ENCODE measurements at regions of chr3 and their contacts with region 1.

Region 1: GRCh38 chr3:10322352-10322710 is 1.4 kb upstream of the SEC13 start:
- DNase-seq: peak in 3 of 14 experiments; percentile 32 to 53 (median 47)
- ATAC-seq: no peak
- H3K4me3 ChIP-seq: no peak overlapping the region
- H3K4me3 Mint-ChIP-seq: peak overlapping the region; percentile 87
- H3K27ac ChIP-seq: no peak overlapping the region
- H3K27ac Mint-ChIP-seq: peak overlapping the region; percentile 91
- H3K4me1 ChIP-seq: peaks cover 32% of the 10 kb centered on the region
- H3K4me1 Mint-ChIP-seq: peaks cover 32% of the 10 kb centered on the region
- H3K27me3 ChIP-seq: peaks cover 0 to 3% of the 10 kb centered on the region in 2 experiments
- H3K27me3 Mint-ChIP-seq: peaks cover 6% of the 10 kb centered on the region
- CTCF ChIP-seq: peak; percentile 34

Region 2: GRCh38 chr3:8963137-8963869 is 1359.0 kb before region 1 on chr3 and contains the start of gene RAD18:
- CTCF ChIA-PET with region 1: no interaction called
- POLR2A ChIA-PET with region 1: no interaction called
- intact Hi-C with region 1: loop called in 1 of 2 experiments (anchors 5 kb)
- DNase-seq: peak; percentile 87 to 96 (median 90)
- ATAC-seq: peak; percentile 93
- H3K4me3 ChIP-seq: peak within 1 kb of the TSS; percentile 88
- H3K4me3 Mint-ChIP-seq: peak within 1 kb of the TSS; percentile 97
- H3K27ac ChIP-seq: peak within 1 kb of the TSS; percentile 80 to 92
- H3K27ac Mint-ChIP-seq: peak within 1 kb of the TSS; percentile 95
- H3K4me1 ChIP-seq: peaks cover 15% of the 10 kb centered on the region
- H3K4me1 Mint-ChIP-seq: peaks cover 43% of the 10 kb centered on the region
- H3K27me3 ChIP-seq: no peaks in the 10 kb centered on the region
- H3K27me3 Mint-ChIP-seq: peaks cover 1% of the 10 kb centered on the region
- CTCF ChIP-seq: no peak
- total RNA-seq, gene RAD18: 9.6 to 10.0 TPM

Region 3: DNA sequence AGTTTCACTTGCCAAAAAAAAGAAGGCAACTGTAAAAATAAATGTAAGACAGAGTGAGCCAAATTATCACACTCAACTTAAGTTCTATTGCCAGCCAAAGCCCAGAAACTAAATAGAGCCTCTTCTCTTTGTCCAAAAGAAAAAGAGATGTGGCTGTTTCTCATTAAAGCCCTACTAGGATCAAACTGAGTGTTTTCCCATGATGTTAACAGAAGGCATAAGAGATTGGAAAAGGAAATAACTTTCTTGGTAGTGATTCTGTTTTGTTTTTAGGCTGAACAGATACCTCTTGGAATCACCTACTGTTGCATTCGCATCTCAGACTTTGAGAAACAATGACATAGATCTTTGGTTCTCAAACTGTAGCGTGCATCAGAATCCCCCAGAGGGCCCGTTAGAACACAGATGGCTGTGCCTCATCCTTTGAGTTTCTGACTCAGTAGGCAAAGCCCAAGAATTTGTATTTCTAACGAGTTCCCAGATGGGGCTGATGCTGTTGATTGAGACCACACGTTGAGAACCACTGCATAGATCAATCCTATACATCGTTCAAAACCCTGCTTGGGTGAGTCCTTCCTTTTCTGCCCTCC is 1030.4 kb before region 1 on chr3:
- CTCF ChIA-PET with region 1: no interaction called
- POLR2A ChIA-PET with region 1: no interaction called
- intact Hi-C with region 1: no loop called
- DNase-seq: no peak
- ATAC-seq: no peak
- H3K4me3 ChIP-seq: no peak overlapping the region
- H3K4me3 Mint-ChIP-seq: no peak overlapping the region
- H3K27ac ChIP-seq: no peak overlapping the region
- H3K27ac Mint-ChIP-seq: no peak overlapping the region
- H3K4me1 ChIP-seq: no peaks in the 10 kb centered on the region
- H3K4me1 Mint-ChIP-seq: no peaks in the 10 kb centered on the region
- H3K27me3 ChIP-seq: peaks cover 0 to 3% of the 10 kb centered on the region in 2 experiments
- H3K27me3 Mint-ChIP-seq: peaks cover 33% of the 10 kb centered on the region
- CTCF ChIP-seq: no peak

Region 4: DNA sequence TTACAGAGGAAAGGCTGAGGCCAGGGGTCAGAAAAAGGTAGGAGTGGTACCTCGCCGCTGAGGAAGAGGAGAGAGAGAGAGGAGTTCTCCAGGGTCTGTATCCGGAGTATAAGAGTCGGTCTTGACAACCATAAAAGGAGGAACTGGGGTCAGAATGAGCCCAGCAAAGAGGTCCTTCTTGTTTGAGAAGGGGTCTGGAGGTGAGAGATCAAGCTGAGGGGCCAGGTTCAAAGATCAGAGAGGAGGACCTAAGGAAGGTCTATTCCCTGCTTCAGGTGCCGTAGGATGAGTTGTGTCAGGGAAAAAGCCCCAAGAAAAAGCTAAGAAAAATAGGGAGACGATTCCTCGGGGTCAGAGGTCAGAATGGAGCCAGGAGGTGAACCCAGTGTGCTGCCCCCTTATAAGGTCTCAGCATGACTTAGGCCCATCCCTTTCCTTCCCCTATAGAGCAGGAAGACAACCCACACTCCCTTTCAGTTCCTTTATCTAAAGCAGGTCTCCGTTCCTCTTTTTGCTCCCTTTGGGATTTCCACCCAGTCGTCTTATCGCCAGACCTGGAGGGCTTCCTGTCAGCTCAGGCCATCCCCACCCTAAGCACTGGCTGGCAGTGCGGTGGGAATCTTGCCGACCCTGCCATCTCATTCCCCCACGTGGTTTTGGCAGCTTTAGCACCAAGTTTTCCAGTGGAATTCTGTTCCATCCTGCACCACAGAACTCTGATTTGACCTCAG is 672.4 kb before region 1 on chr3:
- CTCF ChIA-PET with region 1: no interaction called
- POLR2A ChIA-PET with region 1: interaction called, 8 read pairs
- intact Hi-C with region 1: loop called in 1 of 2 experiments (anchors 5 kb)
- DNase-seq: peak in 3 of 14 experiments; percentile 40 to 57 (median 53)
- ATAC-seq: no peak
- H3K4me3 ChIP-seq: peak overlapping the region; percentile 92
- H3K4me3 Mint-ChIP-seq: peak overlapping the region; percentile 96
- H3K27ac ChIP-seq: peak overlapping the region; percentile 78 to 92
- H3K27ac Mint-ChIP-seq: peak overlapping the region; percentile 87
- H3K4me1 ChIP-seq: peaks cover 36% of the 10 kb centered on the region
- H3K4me1 Mint-ChIP-seq: peaks cover 35% of the 10 kb centered on the region
- H3K27me3 ChIP-seq: no peaks in the 10 kb centered on the region
- H3K27me3 Mint-ChIP-seq: no peaks in the 10 kb centered on the region
- CTCF ChIP-seq: no peak

Region 5: DNA sequence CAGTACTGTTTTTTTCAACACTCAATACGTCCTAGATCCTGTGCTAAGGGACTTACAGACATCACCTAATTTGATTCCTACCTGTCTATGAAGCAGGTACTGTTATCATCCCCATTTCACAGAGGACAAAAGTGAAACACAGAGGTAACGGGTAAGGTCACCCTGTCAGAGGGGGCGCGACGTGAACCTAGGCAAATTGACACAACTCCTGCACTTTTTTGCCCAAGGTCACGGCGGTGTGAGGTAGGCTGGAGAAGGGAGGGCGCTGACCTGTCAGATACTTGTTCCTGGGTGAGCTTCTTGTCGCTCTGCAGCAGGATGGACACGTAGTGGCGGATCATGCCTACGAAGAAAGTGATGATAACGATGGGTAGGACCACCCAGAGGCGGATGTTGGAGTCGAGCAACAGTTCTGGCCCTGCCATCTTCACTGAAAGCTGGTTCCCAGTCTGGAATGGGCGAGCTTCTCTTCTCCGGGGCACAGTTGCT is 336.1 kb before region 1 on chr3:
- CTCF ChIA-PET with region 1: no interaction called
- POLR2A ChIA-PET with region 1: interaction called, 11 read pairs
- intact Hi-C with region 1: no loop called
- DNase-seq: no peak
- ATAC-seq: peak; percentile 44
- H3K4me3 ChIP-seq: peak overlapping the region; percentile 99
- H3K4me3 Mint-ChIP-seq: peak overlapping the region; percentile 96
- H3K27ac ChIP-seq: peak overlapping the region; percentile 75 to 94
- H3K27ac Mint-ChIP-seq: peak overlapping the region; percentile 98
- H3K4me1 ChIP-seq: peaks cover 27% of the 10 kb centered on the region
- H3K4me1 Mint-ChIP-seq: peaks cover 27% of the 10 kb centered on the region
- H3K27me3 ChIP-seq: no peaks in the 10 kb centered on the region
- H3K27me3 Mint-ChIP-seq: no peaks in the 10 kb centered on the region
- CTCF ChIP-seq: no peak

Region 6: GRCh38 chr3:10115326-10116137 is 206.8 kb before region 1 on chr3 and contains the start of gene BRK1:
- CTCF ChIA-PET with region 1: no interaction called
- POLR2A ChIA-PET with region 1: interaction called, 3 read pairs
- intact Hi-C with region 1: loop called in 1 of 2 experiments (anchors 1 kb)
- DNase-seq: peak; percentile 83 to 98 (median 92)
- ATAC-seq: peak; percentile 97
- H3K4me3 ChIP-seq: peak within 1 kb of the TSS; percentile 98
- H3K4me3 Mint-ChIP-seq: peak within 1 kb of the TSS; percentile 95
- H3K27ac ChIP-seq: peak within 1 kb of the TSS; percentile 64 to 74
- H3K27ac Mint-ChIP-seq: peak within 1 kb of the TSS; percentile 88
- H3K4me1 ChIP-seq: peaks cover 41% of the 10 kb centered on the region
- H3K4me1 Mint-ChIP-seq: peaks cover 36% of the 10 kb centered on the region
- H3K27me3 ChIP-seq: no peaks in the 10 kb centered on the region
- H3K27me3 Mint-ChIP-seq: no peaks in the 10 kb centered on the region
- CTCF ChIP-seq: no peak
- total RNA-seq, gene BRK1: 33.1 to 33.8 TPM

Region 7: GRCh38 chr3:10263646-10264363 is 58.5 kb before region 1 on chr3:
- CTCF ChIA-PET with region 1: no interaction called
- POLR2A ChIA-PET with region 1: interaction called, 5 read pairs
- intact Hi-C with region 1: loop called in 1 of 2 experiments (anchors 2 kb)
- DNase-seq: peak; percentile 36 to 83 (median 64)
- ATAC-seq: peak; percentile 93
- H3K4me3 ChIP-seq: peak overlapping the region; percentile 41
- H3K4me3 Mint-ChIP-seq: peak overlapping the region; percentile 60
- H3K27ac ChIP-seq: peak overlapping the region; percentile 64 to 79
- H3K27ac Mint-ChIP-seq: peak overlapping the region; percentile 87
- H3K4me1 ChIP-seq: peaks cover 63% of the 10 kb centered on the region
- H3K4me1 Mint-ChIP-seq: peaks cover 86% of the 10 kb centered on the region
- H3K27me3 ChIP-seq: no peaks in the 10 kb centered on the region
- H3K27me3 Mint-ChIP-seq: no peaks in the 10 kb centered on the region
- CTCF ChIP-seq: peak; percentile 68